AG04450 (cell line): ENCODE measurements at regions of chr14 and their contacts with region 1.

Region 1: DNA sequence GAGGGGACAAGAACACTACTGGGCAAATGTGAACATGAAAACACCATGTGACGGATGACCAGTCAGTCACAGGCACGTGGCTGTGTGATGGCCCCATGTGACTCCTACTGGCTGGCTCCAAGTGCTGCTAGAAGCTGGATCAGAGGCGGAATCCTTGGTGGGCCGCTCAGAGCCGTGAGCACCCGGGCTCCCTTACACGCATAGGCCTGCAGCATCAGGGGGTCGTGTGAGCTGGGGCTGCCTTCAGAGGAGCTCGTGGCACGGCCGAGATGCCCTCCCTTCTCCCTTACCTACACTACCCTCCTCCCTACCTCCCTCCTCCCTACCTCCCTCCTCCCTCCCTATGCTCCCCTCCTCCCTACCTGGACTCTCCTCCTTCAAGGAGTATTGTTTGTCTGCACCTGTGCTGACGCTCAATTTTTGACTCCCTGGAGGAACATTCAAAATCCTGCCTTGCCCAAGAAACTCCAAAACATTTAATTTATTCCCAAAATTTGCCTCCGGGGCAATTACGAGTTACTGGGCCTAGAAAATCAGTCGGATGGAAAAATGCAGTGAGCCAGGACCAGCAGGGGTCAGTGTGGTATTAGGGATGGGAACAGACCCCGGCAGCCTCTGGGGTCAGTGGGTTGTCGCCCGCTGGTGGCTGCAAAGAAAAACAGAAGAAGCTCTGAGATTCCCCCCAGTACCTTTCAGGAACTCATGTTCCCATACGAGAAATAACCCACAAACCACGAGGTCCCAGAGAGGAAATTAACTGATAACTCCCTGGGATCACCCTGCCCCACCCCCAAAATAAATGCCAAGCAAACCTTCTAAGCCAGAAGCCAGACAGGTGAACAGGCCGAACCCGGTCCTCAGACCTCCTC is 61.2 kb downstream of the C14orf132 start:
- DNase-seq: peak; percentile 66
- H3K4me3 ChIP-seq: no peak overlapping the region
- H3K27ac ChIP-seq: no peak overlapping the region
- H3K27me3 ChIP-seq: no peaks in the 10 kb centered on the region
- CTCF ChIP-seq: peak; percentile 97

Region 2: DNA sequence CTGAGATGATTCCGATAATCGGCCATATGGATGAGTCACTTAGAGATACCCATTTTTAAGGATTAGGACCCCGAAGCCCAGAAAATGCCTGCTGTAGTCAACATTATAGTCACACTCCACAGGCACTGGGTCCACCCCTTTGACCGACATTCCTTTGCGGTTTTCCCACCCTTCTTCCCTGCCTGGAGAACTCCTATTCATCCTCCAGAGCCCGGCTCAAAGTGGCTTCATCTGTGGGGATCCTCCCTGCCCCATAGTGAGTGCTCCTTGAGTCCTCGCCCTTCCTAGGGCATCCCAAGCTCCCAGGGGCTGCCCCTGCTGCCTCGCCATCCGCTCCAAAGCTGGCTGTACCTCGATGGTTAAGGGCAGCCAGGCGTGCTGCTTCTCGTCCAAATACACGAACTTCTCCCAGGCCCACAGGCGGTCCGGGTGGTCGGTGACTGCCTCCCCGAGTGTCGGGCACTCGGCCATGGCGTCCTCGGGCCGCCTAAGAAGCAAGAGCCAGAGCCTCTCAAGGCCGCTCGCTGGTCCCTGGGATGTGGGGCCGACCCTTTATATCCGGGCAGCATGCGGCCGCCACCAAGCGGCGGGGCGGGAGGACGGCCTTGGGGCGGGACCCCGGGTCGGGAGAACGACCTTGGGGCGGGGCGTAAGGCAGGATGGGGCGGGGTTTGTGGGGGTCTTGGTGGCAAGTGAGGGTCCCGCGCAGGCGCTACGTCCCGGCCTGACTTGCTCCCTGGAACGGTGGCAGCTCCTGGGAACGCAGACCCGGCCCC is 386.6 kb before region 1 on chr14 and contains the start of gene TCL1A:
- CTCF ChIA-PET with region 1: no interaction called
- POLR2A ChIA-PET with region 1: no interaction called
- DNase-seq: no peak
- H3K4me3 ChIP-seq: no peak within 1 kb of the TSS
- H3K27ac ChIP-seq: no peak within 1 kb of the TSS
- H3K27me3 ChIP-seq: peaks cover 4% of the 10 kb centered on the region
- CTCF ChIP-seq: no peak
- polyA plus RNA-seq, gene TCL1A: not detected in 2 replicates

Region 3: GRCh38 chr14:96038920-96039632 is 61.3 kb before region 1 on chr14 and contains the start of gene C14orf132:
- CTCF ChIA-PET with region 1: interaction called, 14 read pairs
- POLR2A ChIA-PET with region 1: interaction called, 4 read pairs
- DNase-seq: no peak
- H3K4me3 ChIP-seq: peak within 1 kb of the TSS; percentile 89
- H3K27ac ChIP-seq: peak within 1 kb of the TSS; percentile 13
- H3K27me3 ChIP-seq: no peaks in the 10 kb centered on the region
- CTCF ChIP-seq: no peak
- polyA plus RNA-seq, gene C14orf132: 42.0 and 47.7 TPM in 2 replicates

Region 4: DNA sequence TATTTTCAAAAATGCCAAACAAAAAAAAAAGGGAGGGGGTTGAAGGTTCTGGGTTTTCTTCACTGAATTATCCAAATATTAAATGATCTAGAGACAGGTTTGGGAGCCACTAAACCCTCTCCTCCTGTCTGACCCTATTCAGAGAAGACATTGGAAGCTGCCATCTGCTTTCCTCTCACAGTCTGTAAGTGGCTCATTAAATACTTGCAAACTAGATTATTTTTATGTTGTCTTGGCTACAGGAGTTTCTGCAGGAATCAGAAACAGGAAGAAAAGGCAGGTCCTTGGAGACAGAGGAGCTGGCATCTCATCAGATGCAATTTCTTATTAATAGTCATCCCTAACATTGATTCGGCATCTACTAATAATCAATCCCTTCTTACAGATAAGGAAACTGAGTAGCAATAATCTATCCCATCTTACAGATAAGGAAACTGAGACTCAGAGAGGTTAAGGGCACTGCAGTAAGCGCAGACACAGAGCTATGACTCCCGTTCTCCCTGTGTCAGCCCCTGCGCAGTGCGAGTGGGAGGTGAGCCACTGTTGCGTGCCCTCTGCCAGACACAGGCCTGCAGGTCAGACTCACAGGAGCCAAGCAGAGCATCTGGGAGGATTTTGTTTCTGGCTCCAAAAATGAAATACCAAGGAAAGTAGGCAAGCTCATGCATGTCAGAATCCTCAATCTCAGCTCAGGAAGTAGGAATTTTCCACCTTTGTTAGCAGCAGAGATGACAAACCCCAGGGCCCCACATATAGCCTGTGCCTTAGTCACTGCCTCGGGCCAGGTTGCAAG is 115.3 kb after region 1 on chr14:
- CTCF ChIA-PET with region 1: interaction called, 34 read pairs
- POLR2A ChIA-PET with region 1: interaction called, 4 read pairs
- DNase-seq: no peak
- H3K4me3 ChIP-seq: no peak overlapping the region
- H3K27ac ChIP-seq: peak overlapping the region; percentile 57
- H3K27me3 ChIP-seq: no peaks in the 10 kb centered on the region
- CTCF ChIP-seq: no peak

Region 5: DNA sequence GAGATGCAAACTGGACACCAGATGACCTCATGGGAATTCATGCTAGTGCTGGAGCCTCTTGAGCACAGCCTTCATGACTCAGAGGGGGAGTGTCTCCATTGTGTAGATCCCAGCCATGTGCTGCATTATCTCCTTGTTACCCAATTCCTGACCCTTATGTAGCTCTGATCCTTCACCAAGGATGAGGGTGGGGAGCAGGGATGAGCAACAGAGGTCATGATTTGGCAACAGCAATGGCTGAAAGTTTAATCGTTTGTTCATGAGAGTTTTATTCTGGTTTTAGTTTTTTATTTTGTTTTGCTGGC is 146.1 kb after region 1 on chr14:
- CTCF ChIA-PET with region 1: interaction called, 16 read pairs
- POLR2A ChIA-PET with region 1: interaction called, 5 read pairs
- DNase-seq: peak; percentile 94
- H3K4me3 ChIP-seq: no peak overlapping the region
- H3K27ac ChIP-seq: peak overlapping the region; percentile 93
- H3K27me3 ChIP-seq: no peaks in the 10 kb centered on the region
- CTCF ChIP-seq: no peak

Region 6: GRCh38 chr14:96268431-96269358 is 168.3 kb after region 1 on chr14:
- CTCF ChIA-PET with region 1: interaction called, 218 read pairs
- POLR2A ChIA-PET with region 1: interaction called, 6 read pairs
- DNase-seq: peak; percentile 88
- H3K4me3 ChIP-seq: no peak overlapping the region
- H3K27ac ChIP-seq: peak overlapping the region; percentile 89
- H3K27me3 ChIP-seq: no peaks in the 10 kb centered on the region
- CTCF ChIP-seq: no peak

Region 7: DNA sequence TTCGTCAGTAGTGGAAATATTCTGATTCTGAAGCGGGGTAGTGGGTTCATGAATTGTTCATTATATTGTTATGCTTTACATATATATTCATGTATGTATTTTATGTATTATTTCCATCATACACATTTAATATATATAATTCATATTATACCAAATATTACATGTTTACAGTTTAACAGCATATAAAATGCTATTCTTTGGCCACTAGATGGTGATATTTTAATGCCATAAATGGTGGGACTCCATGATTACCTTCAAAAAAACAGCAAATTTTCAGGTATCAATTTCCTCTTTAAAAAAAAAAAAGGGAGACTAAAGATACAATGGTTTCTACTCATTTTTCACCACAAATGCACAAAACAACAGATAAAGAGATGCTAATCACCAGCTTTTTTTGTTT is 196.6 kb after region 1 on chr14:
- CTCF ChIA-PET with region 1: interaction called, 13 read pairs
- POLR2A ChIA-PET with region 1: no interaction called
- DNase-seq: no peak
- H3K4me3 ChIP-seq: no peak overlapping the region
- H3K27ac ChIP-seq: no peak overlapping the region
- H3K27me3 ChIP-seq: no peaks in the 10 kb centered on the region
- CTCF ChIP-seq: peak; percentile 59